Dendritic cell treated with granulocyte-macrophage colony-stimulating factor and Interleukin-4, amounts not matched to agents 40 ng/mL and 50 ng/mL, for 4 days (primary cell): ENCODE measurements at regions of chr3 and their contacts with region 1.

Region 1: GRCh38 chr3:98732286-98733052 is 30.7 kb upstream of the ST3GAL6 start:
- H3K4me3 Mint-ChIP-seq: peak overlapping the region; percentile 96
- H3K27ac Mint-ChIP-seq: peak overlapping the region; percentile 92
- H3K4me1 Mint-ChIP-seq: peaks cover 54% of the 10 kb centered on the region
- H3K27me3 Mint-ChIP-seq: peaks cover 1% of the 10 kb centered on the region

Region 2: DNA sequence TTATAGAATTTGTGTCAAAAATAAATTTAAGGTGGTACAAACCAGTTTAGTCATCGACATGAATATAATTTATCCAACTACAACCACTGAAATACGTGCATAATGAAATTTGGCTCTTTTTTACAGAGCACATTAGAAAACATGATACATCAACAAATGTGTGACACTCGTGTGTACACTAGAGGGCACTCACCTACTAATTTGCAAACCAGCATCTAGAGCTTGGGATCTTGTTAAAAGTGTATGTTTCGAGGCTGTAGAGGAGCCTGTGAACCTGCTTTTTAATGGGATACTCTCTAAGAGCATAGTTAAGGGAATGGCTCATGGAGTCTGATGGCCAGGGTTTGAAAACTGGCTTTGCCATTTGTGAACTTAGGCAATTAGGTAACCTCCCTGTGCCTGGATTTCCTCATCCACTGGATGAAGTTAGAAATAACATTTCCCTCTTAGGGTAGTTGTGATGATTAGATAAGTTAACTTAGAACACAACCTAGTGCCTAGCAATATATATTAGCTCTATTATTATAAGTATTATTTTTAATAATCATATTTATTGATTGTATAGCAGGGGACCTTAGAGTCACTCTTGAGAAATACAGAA is 130.3 kb before region 1 on chr3:
- intact Hi-C with region 1: loop called (anchors 5 kb)
- H3K4me3 Mint-ChIP-seq: no peak overlapping the region
- H3K27ac Mint-ChIP-seq: no peak overlapping the region
- H3K4me1 Mint-ChIP-seq: peaks cover 30% of the 10 kb centered on the region
- H3K27me3 Mint-ChIP-seq: no peaks in the 10 kb centered on the region

Region 3: DNA sequence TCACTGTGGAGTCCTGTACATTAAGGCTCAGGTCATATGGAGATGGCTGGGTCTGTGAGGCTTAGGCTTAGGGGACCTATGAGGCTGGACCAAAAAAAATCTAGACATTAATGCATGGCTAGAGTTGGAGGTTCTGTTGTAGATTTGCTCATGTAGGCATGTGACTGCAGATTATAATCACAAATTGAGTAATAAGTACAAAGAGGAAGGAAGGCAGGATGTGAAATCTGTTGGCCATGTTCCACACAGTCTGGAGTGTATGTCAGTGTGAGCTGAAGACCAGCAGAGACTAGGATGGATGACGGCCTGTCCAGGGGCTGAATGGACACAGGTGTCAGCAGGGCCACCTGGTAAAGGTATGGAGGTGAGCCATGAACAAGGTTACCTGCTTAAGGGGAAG is 30.6 kb after region 1 on chr3 and contains the start of gene ST3GAL6:
- intact Hi-C with region 1: loop called (anchors 2 kb)
- H3K4me3 Mint-ChIP-seq: peak within 1 kb of the TSS; percentile 74
- H3K27ac Mint-ChIP-seq: peak within 1 kb of the TSS; percentile 91
- H3K4me1 Mint-ChIP-seq: peaks cover 68% of the 10 kb centered on the region
- H3K27me3 Mint-ChIP-seq: no peaks in the 10 kb centered on the region

Region 4: DNA sequence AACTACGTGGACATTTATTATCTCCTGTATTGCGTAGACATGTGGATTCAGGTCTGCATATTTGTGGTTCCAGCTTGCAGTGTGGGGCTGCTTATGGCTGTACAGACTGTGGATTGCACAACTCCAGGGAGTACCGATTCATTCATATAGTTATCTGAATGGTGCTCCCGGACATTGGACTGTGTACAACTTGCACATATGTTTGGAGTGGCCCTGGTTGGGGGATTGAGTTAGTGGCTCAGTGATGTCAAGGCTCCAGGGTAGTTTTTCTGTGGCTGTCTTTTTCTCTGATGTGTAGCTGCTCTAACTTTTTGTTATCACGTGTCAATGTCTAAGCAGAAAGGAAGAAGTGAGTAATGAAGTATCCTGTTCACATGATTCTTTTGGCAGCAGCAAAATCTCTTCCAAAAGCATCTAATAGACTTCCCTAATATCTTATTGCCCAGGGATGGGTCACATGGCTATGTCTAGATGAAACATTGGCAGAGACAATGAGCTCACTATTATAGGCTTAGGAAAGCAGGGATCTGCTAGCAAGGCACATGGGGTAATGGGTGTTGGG is 46.5 kb after region 1 on chr3:
- intact Hi-C with region 1: loop called (anchors 5 kb)
- H3K4me3 Mint-ChIP-seq: no peak overlapping the region
- H3K27ac Mint-ChIP-seq: peak overlapping the region; percentile 77
- H3K4me1 Mint-ChIP-seq: peaks cover 64% of the 10 kb centered on the region
- H3K27me3 Mint-ChIP-seq: no peaks in the 10 kb centered on the region

Region 5: DNA sequence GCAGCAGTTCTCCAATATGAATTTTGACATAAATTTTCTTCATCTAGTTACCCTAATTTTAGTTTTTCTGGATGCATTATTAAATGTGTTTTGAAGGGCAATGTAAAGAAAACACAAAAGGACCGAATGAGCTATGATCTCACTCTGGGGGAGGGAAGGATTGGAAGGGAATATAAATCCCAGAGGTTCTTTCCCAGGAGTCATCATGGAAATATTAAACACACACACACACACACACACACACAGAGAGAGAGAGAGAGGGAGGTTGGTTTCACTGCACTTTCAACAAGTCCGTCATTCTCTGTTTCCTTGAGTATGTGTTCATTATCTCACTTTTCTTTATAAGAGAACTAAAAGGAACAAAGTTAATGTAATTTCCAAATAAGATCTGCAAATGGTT is 239.7 kb after region 1 on chr3:
- intact Hi-C with region 1: no loop called
- H3K4me3 Mint-ChIP-seq: no peak overlapping the region
- H3K27ac Mint-ChIP-seq: no peak overlapping the region
- H3K4me1 Mint-ChIP-seq: no peaks in the 10 kb centered on the region
- H3K27me3 Mint-ChIP-seq: no peaks in the 10 kb centered on the region

Region 6: GRCh38 chr3:99049164-99049563 is 316.7 kb after region 1 on chr3:
- intact Hi-C with region 1: no loop called
- H3K4me3 Mint-ChIP-seq: no peak overlapping the region
- H3K27ac Mint-ChIP-seq: no peak overlapping the region
- H3K4me1 Mint-ChIP-seq: no peaks in the 10 kb centered on the region
- H3K27me3 Mint-ChIP-seq: no peaks in the 10 kb centered on the region